Activated T-helper 1 cell treated with anti-CD3 and anti-CD28 coated beads, Interleukin-12 subunit alpha, Interleukin-12 subunit beta, Interleukin-2, Interleukin-4 antibody, amounts not matched to agents 30 ng/mL and 10 ng/mL and 1 ng/mL, durations not matched to agents 14 hours and 24 hours and 36 hours (primary cell): ENCODE measurements at regions of chr6 and their contacts with region 1.

Region 1: GRCh38 chr6:5199283-5199682 is 61.5 kb downstream of the LYRM4 start:
- DNase-seq: no peak
- H3K4me3 Mint-ChIP-seq: no peak overlapping the region
- H3K27ac Mint-ChIP-seq: peak overlapping the region; percentile 49
- H3K4me1 Mint-ChIP-seq: peaks cover 9% of the 10 kb centered on the region
- H3K27me3 Mint-ChIP-seq: no peaks in the 10 kb centered on the region

Region 2: DNA sequence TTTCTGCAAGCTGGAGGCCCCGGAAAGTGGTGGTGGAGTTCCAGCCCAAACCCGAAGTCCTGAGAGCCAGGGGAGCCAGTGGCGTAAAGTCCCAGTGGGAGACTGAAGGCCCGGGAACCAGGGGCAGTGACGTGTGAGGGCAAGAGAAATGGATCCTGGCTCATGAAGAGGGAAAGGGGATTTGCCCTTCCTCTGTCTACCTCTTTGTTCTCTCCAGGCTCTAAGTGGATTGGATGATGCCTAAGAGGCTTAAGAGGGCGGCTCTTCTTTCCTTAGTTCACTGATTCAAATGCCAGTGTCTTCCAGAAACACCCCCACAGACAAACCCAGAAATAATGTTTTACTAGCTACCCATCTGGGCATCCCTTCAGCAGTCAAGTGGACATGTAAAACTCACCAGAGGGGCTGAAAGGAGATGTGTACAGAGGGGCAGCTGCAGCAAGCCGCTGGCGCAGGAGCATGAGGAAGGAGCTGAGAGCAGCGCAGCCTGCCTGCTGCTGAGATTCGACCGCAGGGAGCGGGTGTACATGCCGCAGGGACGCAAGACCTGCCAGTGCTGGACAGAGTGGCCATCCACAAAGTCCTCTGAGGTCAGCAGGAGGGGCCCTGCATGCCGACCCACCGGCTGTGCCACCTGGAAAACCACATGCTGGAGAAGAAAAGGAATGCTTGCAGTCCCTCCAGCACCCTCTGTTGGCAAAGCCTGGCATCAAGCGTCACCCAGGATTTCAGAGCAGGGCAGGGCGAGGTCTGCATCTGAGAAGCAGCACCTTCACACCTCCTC is 393.5 kb before region 1 on chr6:
- intact Hi-C with region 1: no loop called
- DNase-seq: no peak
- H3K4me3 Mint-ChIP-seq: no peak overlapping the region
- H3K27ac Mint-ChIP-seq: no peak overlapping the region
- H3K4me1 Mint-ChIP-seq: peaks cover 37% of the 10 kb centered on the region
- H3K27me3 Mint-ChIP-seq: peaks cover 2% of the 10 kb centered on the region

Region 3: DNA sequence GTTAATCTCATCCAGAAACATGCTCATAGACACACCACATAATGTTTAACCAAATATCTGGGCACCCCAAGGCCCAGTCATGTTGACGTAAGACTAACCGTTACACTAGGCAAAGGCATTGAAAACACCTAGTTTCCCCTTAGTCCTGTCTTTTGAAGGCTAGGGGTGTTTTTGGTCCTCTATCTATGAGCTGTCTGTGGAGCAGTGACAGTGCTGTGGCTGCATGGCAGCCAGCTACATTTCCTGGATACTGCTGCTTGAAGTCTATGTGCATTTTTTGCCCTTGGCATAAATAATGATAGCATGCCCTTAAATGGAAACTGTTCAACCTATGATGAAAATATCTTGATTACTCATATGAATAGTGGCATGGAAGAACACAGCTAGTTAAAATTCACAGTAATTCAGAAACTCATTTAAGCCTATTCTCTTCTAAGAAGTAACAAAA is 80.6 kb after region 1 on chr6:
- intact Hi-C with region 1: loop called (anchors 1 kb)
- DNase-seq: peak; percentile 10
- H3K4me3 Mint-ChIP-seq: peak overlapping the region; percentile 13
- H3K27ac Mint-ChIP-seq: peak overlapping the region; percentile 84
- H3K4me1 Mint-ChIP-seq: peaks cover 49% of the 10 kb centered on the region
- H3K27me3 Mint-ChIP-seq: peaks cover 2% of the 10 kb centered on the region